ENCODE measurements at regions of chr15 and their contacts with region 1.

Region 1: GRCh38 chr15:43285609-43286037 is 18.9 kb upstream of the TGM5 start:
- DNase-seq: peak; percentile 85
- CTCF ChIP-seq: peak; percentile 84

Region 2: GRCh38 chr15:43008150-43008549 is 277.5 kb before region 1 on chr15:
- CTCF ChIA-PET with region 1: no interaction called
- POLR2A ChIA-PET with region 1: no interaction called
- DNase-seq: no peak
- CTCF ChIP-seq: no peak

Region 3: DNA sequence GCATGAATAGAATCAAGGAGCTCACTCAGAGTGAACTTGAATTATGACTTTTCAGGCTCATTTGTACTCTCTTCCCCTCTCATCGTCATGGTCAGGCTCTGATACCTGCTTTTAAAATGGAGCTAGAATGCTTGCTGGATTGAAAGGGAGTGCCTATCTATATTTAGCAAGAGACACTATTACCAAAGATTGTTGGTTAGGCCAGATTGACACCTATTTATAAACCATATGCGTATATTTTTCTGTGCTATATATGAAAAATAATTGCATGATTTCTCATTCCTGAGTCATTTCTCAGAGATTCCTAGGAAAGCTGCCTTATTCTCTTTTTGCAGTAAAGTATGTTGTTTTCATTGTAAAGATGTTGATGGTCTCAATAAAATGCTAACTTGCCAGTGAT is 90.8 kb before region 1 on chr15:
- CTCF ChIA-PET with region 1: interaction called, 20 read pairs
- POLR2A ChIA-PET with region 1: no interaction called
- DNase-seq: no peak
- CTCF ChIP-seq: no peak

Region 4: DNA sequence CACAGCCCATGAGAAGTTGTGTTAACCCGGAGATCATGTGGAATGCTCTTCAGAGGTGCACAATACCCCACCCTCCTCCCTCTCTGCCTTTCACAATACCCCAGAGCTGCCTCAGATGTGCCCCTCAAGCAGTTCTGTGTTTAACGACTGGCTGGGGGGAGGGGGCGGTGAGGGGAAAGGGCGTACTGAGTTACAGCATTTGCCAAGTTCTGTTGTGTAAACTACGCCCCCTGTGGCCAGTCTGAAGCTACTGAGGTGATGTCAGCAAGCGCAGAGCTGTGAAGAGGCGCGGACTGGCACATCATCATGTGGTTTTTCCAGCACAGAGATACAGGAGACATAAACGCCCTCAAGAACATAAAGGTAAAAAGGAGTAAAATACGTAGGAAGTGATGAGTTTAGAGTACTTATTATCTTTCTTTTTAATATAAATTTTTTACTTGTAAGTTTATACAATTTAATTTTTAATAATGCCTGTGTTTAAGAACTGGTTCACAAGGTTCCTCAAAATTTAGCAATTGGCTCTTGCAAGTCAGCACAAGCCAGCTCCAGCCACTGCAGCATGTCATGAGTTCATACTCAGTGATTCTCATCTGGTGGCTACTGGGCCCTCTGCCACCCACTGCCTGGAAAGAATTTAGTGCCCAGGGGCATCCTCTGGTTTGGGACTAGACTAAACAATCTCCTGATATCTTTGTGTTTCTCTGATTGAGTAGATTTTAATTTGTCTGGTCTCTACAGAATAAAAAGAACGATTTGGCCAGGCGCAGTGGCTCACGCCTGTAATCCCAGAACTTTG is 66.5 kb before region 1 on chr15:
- CTCF ChIA-PET with region 1: interaction called, 326 read pairs
- POLR2A ChIA-PET with region 1: no interaction called
- DNase-seq: no peak
- CTCF ChIP-seq: no peak

Region 5: DNA sequence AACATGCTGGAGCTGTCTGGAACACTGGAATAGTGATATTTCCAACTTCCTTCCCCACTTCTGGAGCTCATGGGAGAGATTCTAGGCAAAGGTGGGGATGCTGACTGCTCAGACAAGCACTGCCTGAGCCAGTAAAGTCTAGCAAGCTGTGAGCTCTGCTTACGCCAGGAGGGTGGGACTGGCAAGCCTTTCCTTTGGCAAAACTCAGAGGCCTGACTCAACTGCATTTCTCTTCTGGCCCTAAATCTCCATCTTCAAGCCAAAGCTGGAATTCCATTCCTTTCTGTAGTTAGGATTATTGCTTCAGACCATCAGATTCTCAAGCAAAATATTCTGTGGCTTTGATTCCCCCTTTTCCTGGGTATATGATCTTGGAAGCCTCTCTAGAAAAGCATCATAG is 44.5 kb before region 1 on chr15:
- CTCF ChIA-PET with region 1: interaction called, 35 read pairs
- POLR2A ChIA-PET with region 1: no interaction called
- DNase-seq: no peak
- CTCF ChIP-seq: no peak

Region 6: GRCh38 chr15:43268111-43269105 is 17.2 kb before region 1 on chr15:
- CTCF ChIA-PET with region 1: interaction called, 51 read pairs
- POLR2A ChIA-PET with region 1: no interaction called
- DNase-seq: peak; percentile 57
- CTCF ChIP-seq: peak; percentile 59

Region 7: DNA sequence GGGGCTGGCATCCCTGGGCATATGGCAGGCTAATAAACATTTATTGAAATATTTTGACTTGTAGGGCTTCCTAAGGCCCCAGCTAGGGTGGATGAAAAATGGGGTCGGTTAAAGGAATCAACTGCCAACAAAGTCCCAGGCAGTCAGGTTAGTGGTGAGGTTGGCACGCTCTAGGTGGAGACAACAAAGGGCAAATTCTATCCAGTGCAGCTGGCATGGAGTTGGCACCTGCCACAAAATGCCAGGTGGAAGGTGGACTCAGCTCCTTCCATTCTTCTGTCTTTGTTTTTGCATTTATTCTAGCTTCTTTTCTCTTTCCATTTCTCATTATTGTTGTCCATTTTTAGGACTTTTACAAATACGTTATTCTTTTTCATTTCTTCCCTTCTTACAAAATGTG is 13.8 kb after region 1 on chr15:
- CTCF ChIA-PET with region 1: interaction called, 41 read pairs
- POLR2A ChIA-PET with region 1: no interaction called
- DNase-seq: no peak
- CTCF ChIP-seq: no peak

Region 8: DNA sequence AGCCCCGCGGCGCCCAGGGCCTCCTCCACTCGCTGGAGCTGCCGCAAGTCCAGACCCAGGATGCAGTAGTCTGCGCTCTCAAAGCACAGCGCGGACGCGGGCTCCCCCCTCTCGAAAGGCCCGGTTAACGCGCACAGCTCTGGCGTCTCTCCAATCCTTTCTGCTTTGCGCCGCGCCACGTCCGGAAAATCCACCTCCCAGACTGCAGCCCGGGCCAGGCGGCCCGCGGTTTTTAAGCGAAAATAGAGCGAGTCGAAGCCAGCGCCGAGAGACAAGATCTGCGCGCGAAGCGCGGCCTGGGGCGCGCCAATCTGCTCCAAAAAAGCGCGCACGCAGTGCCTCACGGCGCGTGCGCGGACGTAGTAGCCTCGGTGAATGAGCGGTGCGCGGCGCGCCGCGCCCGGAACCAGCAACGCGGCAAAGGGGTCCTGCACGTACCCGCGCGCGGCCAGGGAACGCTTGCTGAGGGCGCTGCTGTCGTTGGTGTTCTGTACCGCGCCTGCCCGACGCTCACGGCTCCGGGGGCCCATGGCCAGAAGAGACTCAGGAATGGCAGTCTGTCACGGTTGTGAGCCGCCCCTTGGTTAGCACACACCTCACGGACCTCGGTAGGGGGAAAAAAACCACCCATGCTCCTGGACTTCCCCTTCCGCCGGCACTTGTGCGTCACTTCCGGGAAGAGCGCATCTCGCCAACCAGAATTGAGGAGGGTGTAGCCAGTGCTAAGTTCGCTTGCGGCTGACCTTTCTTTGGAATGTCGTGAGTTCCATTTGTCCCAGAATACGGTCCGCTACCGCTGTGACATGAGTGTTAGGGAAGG is 44.5 kb after region 1 on chr15 and contains the start of gene LCMT2:
- CTCF ChIA-PET with region 1: interaction called, 10 read pairs
- POLR2A ChIA-PET with region 1: no interaction called
- DNase-seq: peak; percentile 91
- CTCF ChIP-seq: no peak

Region 9: GRCh38 chr15:43423793-43424192 is 138.2 kb after region 1 on chr15:
- CTCF ChIA-PET with region 1: no interaction called
- POLR2A ChIA-PET with region 1: no interaction called
- DNase-seq: no peak
- CTCF ChIP-seq: no peak

Measured in GM10248 (cell line).